Heart right ventricle (tissue), 16 donors: ENCODE measurements at regions of chr20 and their contacts with region 1.

Region 1: DNA sequence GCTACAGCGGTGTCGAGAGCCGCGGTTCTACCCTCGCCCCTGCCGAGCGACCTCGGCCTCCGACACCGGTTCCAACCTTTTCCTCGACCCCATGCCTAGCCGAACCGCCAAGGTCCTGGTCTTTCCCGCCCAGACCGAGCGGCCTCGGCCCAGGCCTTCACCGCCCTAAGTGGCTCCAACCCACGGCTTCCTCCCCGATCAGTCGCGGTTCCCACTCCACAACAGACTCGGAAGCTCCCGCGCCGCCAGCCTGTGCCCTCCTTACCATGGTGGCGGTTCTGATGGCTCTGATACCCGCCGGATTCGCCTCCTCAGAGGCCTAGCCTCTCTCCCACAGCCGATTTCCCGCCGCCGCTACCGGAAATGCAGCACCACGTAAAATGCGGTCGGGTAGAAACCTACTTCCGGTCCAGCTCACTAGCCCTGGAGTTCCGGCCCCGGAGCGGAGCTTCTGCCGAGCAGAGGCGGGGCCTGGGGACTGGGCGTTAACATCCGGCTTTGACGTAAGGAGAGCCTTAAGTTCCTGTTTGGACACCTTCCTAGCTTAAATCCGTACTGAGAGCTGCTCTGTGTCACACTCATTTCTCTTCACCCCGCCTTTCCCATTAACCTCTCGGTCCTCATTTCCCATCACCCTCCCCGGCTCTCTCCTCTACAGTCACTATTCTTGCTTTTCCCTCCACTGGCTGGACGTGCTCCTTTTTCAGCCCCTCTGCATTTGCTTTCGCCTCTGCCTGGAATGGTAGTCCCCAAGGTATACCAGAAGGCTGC is at the start of gene SNRPB:
- DNase-seq: peak; percentile 94 to 97
- ATAC-seq: peak; percentile 99
- H3K4me3 ChIP-seq: peak within 1 kb of the TSS; percentile 37 to 96 (median 84)
- H3K27ac ChIP-seq: peak within 1 kb of the TSS; percentile 68 to 97 (median 90)
- H3K4me1 ChIP-seq: peaks cover 0 to 37% (median 23%) of the 10 kb centered on the region in 9 donors
- H3K27me3 ChIP-seq: no peaks in the 10 kb centered on the region
- CTCF ChIP-seq: no peak
- total RNA-seq, gene SNRPB: 41.4 to 82.1 (median 51.1) TPM

Region 2: GRCh38 chr20:1776681-1777475 is 693.7 kb before region 1 on chr20:
- intact Hi-C with region 1: loop called in 1 of 10 experiments (anchors 10 kb)
- DNase-seq: peak; percentile 88 to 90
- ATAC-seq: peak; percentile 94 to 100 (median 98)
- H3K4me3 ChIP-seq: peak overlapping the region; percentile 56 to 79 (median 71)
- H3K27ac ChIP-seq: peak overlapping the region in 8 of 10 donors; percentile 57 to 80 (median 70)
- H3K4me1 ChIP-seq: peaks cover 8 to 21% (median 10%) of the 10 kb centered on the region in 9 donors
- H3K27me3 ChIP-seq: peaks cover 0 to 3% (median 0%) of the 10 kb centered on the region in 7 donors
- CTCF ChIP-seq: peak; percentile 79 to 90 (median 84)

Region 3: DNA sequence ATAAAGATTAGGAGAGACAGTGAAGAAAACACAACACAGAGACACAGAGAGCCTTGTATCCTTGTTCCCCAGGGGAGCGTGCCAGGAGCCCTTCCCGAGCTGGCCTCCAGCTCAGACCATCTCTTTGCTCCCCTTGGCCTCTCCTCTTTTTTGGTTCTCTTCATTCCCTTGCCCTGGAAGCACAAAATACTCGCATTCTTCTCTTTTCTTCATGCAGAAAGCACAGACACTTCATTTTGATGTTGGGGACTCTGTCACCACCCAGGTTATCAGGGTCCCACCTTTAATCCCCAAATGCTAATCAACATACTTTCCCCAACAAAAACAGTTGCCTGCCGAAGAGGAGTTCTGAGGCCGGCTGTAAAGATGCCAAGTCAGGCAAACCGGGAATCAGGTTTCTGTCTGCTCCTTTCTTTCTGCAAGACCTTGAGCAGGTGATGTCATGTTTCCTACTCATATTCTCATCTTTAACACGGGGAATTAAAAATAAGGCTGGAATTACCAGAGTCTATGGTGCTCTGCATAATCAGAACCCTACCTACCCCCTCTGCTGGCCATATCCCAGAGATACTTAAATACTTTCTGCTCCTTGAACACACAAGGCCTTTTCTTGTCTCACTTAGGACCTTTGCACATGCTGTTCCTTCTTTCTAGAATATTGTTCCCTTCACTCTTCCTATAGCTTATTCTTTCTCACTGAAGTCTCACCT is 68.2 kb before region 1 on chr20:
- intact Hi-C with region 1: no loop called
- DNase-seq: no peak
- ATAC-seq: no peak
- H3K4me3 ChIP-seq: no peak overlapping the region
- H3K27ac ChIP-seq: no peak overlapping the region
- H3K4me1 ChIP-seq: no peaks in the 10 kb centered on the region
- H3K27me3 ChIP-seq: peaks cover 0 to 17% (median 6%) of the 10 kb centered on the region in 7 donors
- CTCF ChIP-seq: peak in 3 of 9 donors; percentile 8 to 36 (median 17)

Region 4: DNA sequence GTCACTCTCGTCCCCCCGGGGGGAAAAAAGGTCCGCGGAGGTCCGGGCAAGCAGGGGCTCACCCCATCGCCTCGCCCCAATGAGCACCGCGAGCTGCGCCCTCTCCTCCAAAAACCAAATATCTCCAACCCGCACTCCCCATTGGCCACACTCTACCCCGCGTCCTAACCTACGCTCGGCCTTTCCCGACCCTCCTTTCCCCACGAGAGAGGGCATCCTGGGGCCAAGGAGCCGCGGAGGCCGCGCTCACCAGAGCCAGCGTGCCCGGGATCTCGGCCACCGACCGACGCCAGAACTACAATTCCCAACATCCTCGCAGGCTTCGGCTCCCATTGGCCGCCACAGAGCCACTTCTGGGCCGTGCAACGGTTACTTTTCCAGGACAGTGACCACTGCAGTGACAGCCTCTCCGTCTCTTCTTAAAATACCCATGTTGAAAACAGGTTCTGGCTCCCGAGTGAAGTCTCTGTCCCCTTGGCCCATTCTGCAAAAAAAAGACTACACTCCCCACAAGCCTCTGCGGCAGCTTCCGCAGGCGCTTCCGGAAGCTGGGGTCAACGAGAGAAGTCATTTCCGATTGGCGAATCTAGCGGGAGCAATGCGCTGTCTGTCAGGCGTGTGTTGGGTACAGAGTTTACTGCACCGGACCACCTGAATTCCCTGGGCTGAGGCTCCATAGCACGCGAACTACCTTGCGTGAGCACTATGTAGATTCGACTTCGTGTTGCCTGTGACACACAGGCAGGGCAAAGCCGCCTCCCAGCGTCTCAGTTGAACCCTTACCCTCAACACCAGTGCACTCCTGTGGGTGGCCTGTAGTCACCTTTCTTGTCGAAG is 38.2 kb after region 1 on chr20 and contains the start of gene ZNF343:
- intact Hi-C with region 1: loop called in 2 of 10 experiments (anchors 1 to 5 kb)
- DNase-seq: peak; percentile 74 to 83
- ATAC-seq: peak; percentile 94 to 98 (median 96)
- H3K4me3 ChIP-seq: peak within 1 kb of the TSS; percentile 66 to 97 (median 78)
- H3K27ac ChIP-seq: peak within 1 kb of the TSS; percentile 78 to 98 (median 90)
- H3K4me1 ChIP-seq: peaks cover 0 to 19% (median 16%) of the 10 kb centered on the region in 9 donors
- H3K27me3 ChIP-seq: peaks cover 0 to 4% (median 0%) of the 10 kb centered on the region in 7 donors
- CTCF ChIP-seq: no peak
- total RNA-seq, gene ZNF343: 3.6 to 7.1 (median 5.7) TPM